Activated CD4-positive, alpha-beta memory T cell treated with anti-CD3 and anti-CD28 coated beads for 36 hours (primary cell): ENCODE measurements at regions of chr13 and their contacts with region 1.

Region 1: GRCh38 chr13:48210178-48210577 is 22.8 kb upstream of the ITM2B start:
- DNase-seq: no peak
- H3K4me3 Mint-ChIP-seq: no peak overlapping the region
- H3K27ac Mint-ChIP-seq: no peak overlapping the region
- H3K4me1 Mint-ChIP-seq: peaks cover 20% of the 10 kb centered on the region
- H3K27me3 Mint-ChIP-seq: peaks cover 9% of the 10 kb centered on the region

Region 2: DNA sequence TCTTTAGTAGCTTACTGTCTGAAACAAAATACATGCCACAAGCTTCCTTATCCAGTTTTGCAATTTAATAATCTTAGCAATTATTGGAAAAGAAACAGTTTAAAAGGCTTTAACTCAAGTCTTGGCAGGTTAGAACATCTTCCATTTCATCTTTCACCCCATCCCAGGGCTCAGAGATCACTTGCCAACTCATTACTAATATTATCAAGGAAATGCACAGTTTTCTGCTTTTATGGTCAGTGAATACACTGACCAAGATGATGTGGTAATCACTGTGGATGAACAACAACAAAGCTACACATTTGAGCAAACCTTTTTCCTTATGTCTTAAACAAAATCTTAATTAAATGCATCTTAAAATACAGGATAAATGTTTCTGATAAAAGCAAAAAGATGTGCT is 25.2 kb before region 1 on chr13:
- CTCF ChIA-PET with region 1: no interaction called
- POLR2A ChIA-PET with region 1: no interaction called
- intact Hi-C with region 1: loop called (anchors 1 kb)
- DNase-seq: no peak
- H3K4me3 Mint-ChIP-seq: no peak overlapping the region
- H3K27ac Mint-ChIP-seq: no peak overlapping the region
- H3K4me1 Mint-ChIP-seq: peaks cover 51% of the 10 kb centered on the region
- H3K27me3 Mint-ChIP-seq: no peaks in the 10 kb centered on the region

Region 3: GRCh38 chr13:48222358-48223301 is 12.5 kb after region 1 on chr13:
- CTCF ChIA-PET with region 1: interaction called, 5 read pairs
- POLR2A ChIA-PET with region 1: interaction called, 3 read pairs
- intact Hi-C with region 1: loop called (anchors 1 kb)
- DNase-seq: peak; percentile 30
- H3K4me3 Mint-ChIP-seq: peak overlapping the region; percentile 35
- H3K27ac Mint-ChIP-seq: no peak overlapping the region
- H3K4me1 Mint-ChIP-seq: peaks cover 51% of the 10 kb centered on the region
- H3K27me3 Mint-ChIP-seq: no peaks in the 10 kb centered on the region

Region 4: GRCh38 chr13:48249018-48249417 is 38.8 kb after region 1 on chr13:
- CTCF ChIA-PET with region 1: no interaction called
- POLR2A ChIA-PET with region 1: no interaction called
- intact Hi-C with region 1: loop called (anchors 1 kb)
- DNase-seq: no peak
- H3K4me3 Mint-ChIP-seq: no peak overlapping the region
- H3K27ac Mint-ChIP-seq: peak overlapping the region; percentile 43
- H3K4me1 Mint-ChIP-seq: peaks cover 65% of the 10 kb centered on the region
- H3K27me3 Mint-ChIP-seq: no peaks in the 10 kb centered on the region

Region 5: GRCh38 chr13:48562296-48563066 is 352.3 kb after region 1 on chr13:
- CTCF ChIA-PET with region 1: no interaction called
- POLR2A ChIA-PET with region 1: no interaction called
- intact Hi-C with region 1: loop called (anchors 1 kb)
- DNase-seq: peak; percentile 79
- H3K4me3 Mint-ChIP-seq: peak overlapping the region; percentile 31
- H3K27ac Mint-ChIP-seq: peak overlapping the region; percentile 58
- H3K4me1 Mint-ChIP-seq: peaks cover 43% of the 10 kb centered on the region
- H3K27me3 Mint-ChIP-seq: peaks cover 52% of the 10 kb centered on the region

Region 6: DNA sequence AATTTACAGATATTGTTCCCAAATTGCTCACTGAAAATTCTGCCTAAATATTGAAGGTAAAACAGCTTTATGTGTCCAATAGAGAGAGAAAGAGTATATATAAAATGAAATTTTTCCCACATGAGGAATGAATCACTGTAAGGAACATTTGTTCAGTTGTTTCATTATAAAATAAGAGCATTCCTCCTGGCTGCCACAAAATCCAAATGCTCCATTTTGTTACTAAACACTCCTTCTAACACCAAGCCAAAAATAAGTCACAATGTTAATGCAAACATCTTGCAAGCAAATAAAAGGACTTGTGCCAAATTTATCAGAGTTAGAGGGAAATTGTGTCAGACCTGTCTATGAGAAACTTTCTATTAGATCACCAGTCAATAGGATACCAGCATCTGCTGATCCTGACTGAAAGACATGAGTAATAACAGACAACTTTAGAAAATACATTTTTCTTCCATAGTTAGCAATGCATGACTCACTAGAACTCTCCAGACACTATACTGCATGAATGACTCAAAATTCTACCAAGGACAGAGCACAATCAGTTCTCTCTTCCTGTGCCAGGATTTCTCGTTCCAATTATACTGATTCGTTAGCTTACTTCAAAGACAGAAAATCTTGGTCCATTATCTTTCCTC is 682.0 kb after region 1 on chr13:
- CTCF ChIA-PET with region 1: no interaction called
- POLR2A ChIA-PET with region 1: no interaction called
- intact Hi-C with region 1: loop called (anchors 10 kb)
- DNase-seq: no peak
- H3K4me3 Mint-ChIP-seq: no peak overlapping the region
- H3K27ac Mint-ChIP-seq: peak overlapping the region; percentile 49
- H3K4me1 Mint-ChIP-seq: peaks cover 36% of the 10 kb centered on the region
- H3K27me3 Mint-ChIP-seq: peaks cover 3% of the 10 kb centered on the region

Region 7: GRCh38 chr13:49082653-49083536 is 872.7 kb after region 1 on chr13:
- CTCF ChIA-PET with region 1: no interaction called
- POLR2A ChIA-PET with region 1: no interaction called
- intact Hi-C with region 1: no loop called
- DNase-seq: no peak
- H3K4me3 Mint-ChIP-seq: no peak overlapping the region
- H3K27ac Mint-ChIP-seq: no peak overlapping the region
- H3K4me1 Mint-ChIP-seq: peaks cover 15% of the 10 kb centered on the region
- H3K27me3 Mint-ChIP-seq: no peaks in the 10 kb centered on the region